ENCODE measurements at regions of chr2 and their contacts with region 1.

Region 1: GRCh38 chr2:100984892-100985379 is 17.2 kb upstream of the RPL31 start:
- DNase-seq: peak; percentile 81
- ATAC-seq: peak; percentile 80
- H3K4me3 ChIP-seq: no peak overlapping the region
- H3K27ac ChIP-seq: no peak overlapping the region
- H3K4me1 ChIP-seq: peaks cover 10% of the 10 kb centered on the region
- H3K27me3 ChIP-seq: no peaks in the 10 kb centered on the region
- CTCF ChIP-seq: peak; percentile 98
- EP300 ChIP-seq: no peak
- POLR2A ChIP-seq: no peak
- RAD21 ChIP-seq: peak; percentile 93

Region 2: GRCh38 chr2:100592226-100592625 is 392.7 kb before region 1 on chr2:
- CTCF ChIA-PET with region 1: interaction called, 9 read pairs
- POLR2A ChIA-PET with region 1: no interaction called
- in situ Hi-C with region 1: no loop called
- intact Hi-C with region 1: loop called (anchors 1 kb)
- DNase-seq: no peak
- ATAC-seq: no peak
- H3K4me3 ChIP-seq: no peak overlapping the region
- H3K27ac ChIP-seq: no peak overlapping the region
- H3K4me1 ChIP-seq: 0 out of 2 replicates have a peak, but pooled peaks cover 6% of the 10 kb centered on the region
- H3K27me3 ChIP-seq: no peaks in the 10 kb centered on the region
- CTCF ChIP-seq: no peak
- EP300 ChIP-seq: no peak
- POLR2A ChIP-seq: no peak
- RAD21 ChIP-seq: no peak

Region 3: DNA sequence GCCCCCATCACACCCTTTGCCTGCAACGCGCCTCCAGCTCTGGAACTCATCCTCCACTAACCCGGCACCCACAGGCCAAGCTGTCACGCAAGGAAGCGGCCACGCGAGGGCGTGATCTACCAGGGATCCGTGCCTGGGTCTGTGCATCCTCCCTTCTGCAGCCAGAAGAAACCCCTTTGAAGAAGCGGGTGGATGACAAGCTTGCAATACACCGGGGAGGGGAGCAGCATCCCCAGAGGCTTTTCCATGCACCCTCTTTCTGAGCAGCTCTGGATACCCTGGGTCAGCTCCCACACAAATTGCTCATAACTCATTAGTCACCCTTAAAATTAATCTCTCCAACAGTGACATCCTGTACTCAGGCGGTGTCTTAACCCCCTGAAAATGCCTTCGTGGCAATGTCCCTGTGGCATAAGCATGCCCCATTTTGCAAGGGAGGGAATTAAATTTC is 374.5 kb before region 1 on chr2:
- CTCF ChIA-PET with region 1: interaction called, 31 read pairs
- POLR2A ChIA-PET with region 1: no interaction called
- in situ Hi-C with region 1: no loop called
- intact Hi-C with region 1: loop called (anchors 1 kb)
- DNase-seq: peak; percentile 36
- ATAC-seq: peak; percentile 77
- H3K4me3 ChIP-seq: no peak overlapping the region
- H3K27ac ChIP-seq: no peak overlapping the region
- H3K4me1 ChIP-seq: peaks cover 19% of the 10 kb centered on the region
- H3K27me3 ChIP-seq: peaks cover 2 to 56% of the 10 kb centered on the region in 2 experiments; a peak in 4 of 5 replicates
- CTCF ChIP-seq: peak; percentile 94
- EP300 ChIP-seq: no peak
- POLR2A ChIP-seq: no peak
- RAD21 ChIP-seq: peak; percentile 62

Region 4: GRCh38 chr2:100670232-100670631 is 314.7 kb before region 1 on chr2:
- CTCF ChIA-PET with region 1: no interaction called
- POLR2A ChIA-PET with region 1: no interaction called
- in situ Hi-C with region 1: no loop called
- intact Hi-C with region 1: loop called (anchors 2 kb)
- DNase-seq: peak; percentile 46
- ATAC-seq: peak; percentile 95
- H3K4me3 ChIP-seq: no peak overlapping the region
- H3K27ac ChIP-seq: no peak overlapping the region
- H3K4me1 ChIP-seq: 0 out of 2 replicates have a peak, but pooled peaks cover 6% of the 10 kb centered on the region
- H3K27me3 ChIP-seq: peaks cover 2 to 46% of the 10 kb centered on the region in 2 experiments; a peak in 4 of 5 replicates
- CTCF ChIP-seq: peak; percentile 52
- EP300 ChIP-seq: no peak
- POLR2A ChIP-seq: no peak
- RAD21 ChIP-seq: no peak

Region 5: DNA sequence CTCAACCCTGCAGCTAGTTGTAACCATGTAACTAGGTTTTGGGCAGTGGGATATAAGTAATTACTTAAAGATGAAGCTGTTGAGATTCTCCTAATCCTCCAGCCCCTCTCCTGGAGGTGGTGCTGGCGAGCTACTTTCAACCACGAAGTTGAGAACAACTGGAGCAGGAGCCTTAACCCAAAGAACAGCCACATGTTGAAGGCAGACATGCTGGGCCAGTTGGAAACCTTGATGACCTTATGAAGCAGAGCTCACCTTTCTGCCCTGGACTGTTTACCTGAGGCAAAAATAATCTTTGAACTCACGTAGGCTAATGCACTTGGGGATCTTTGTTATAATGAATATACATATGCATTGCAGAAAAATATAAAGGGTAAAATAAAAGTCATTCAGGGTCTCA is 254.6 kb before region 1 on chr2:
- CTCF ChIA-PET with region 1: interaction called, 41 read pairs
- POLR2A ChIA-PET with region 1: no interaction called
- in situ Hi-C with region 1: loop called (anchors 5 kb)
- intact Hi-C with region 1: loop called (anchors 1 kb)
- DNase-seq: peak; percentile 82
- ATAC-seq: peak; percentile 94
- H3K4me3 ChIP-seq: no peak overlapping the region
- H3K27ac ChIP-seq: no peak overlapping the region
- H3K4me1 ChIP-seq: peaks cover 34% of the 10 kb centered on the region
- H3K27me3 ChIP-seq: peaks cover 0 to 2% of the 10 kb centered on the region in 2 experiments; a peak in 1 of 5 replicates
- CTCF ChIP-seq: peak; percentile 88
- EP300 ChIP-seq: no peak
- POLR2A ChIP-seq: no peak
- RAD21 ChIP-seq: peak; percentile 94

Region 6: DNA sequence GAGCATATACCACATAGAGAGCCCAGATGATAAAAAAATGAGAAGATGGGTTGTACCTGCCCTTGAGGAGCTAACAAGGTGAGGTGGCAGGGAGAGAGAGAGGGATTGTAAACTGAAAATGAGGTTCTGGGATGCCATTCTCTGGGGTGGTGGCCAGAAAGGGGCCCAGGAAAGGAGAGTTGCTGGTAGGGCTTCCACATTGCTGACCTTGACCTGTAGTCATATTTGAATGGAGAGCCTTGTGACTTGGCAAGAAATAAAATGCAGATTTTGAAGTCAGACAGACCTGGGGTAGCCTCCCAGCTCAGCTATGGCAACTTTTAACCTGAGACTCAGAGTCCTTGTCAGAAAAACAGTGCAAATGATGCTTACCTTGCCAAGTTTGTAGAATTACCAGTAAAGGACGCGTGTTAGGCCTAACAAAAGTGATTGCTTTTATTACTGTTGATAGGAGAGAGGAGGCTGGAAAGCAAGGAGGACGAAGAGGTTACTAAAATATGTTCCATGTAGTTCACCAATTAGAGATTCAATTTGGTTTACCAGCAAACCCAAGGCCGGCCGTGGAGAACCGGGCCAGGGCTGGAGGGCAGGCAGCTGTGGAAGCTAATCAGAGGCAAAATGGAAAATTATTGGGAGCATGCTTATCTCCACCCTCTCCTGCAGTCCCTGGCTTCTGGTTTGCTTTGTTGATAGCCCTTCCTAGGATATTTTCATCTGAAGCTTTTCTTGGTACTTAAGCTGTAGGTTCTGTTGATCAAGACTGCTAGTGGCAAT is 161.1 kb before region 1 on chr2:
- CTCF ChIA-PET with region 1: interaction called, 4 read pairs
- POLR2A ChIA-PET with region 1: no interaction called
- in situ Hi-C with region 1: no loop called
- intact Hi-C with region 1: loop called (anchors 2 kb)
- DNase-seq: peak; percentile 46
- ATAC-seq: no peak
- H3K4me3 ChIP-seq: no peak overlapping the region
- H3K27ac ChIP-seq: peak overlapping the region; percentile 71
- H3K4me1 ChIP-seq: peaks cover 73% of the 10 kb centered on the region
- H3K27me3 ChIP-seq: no peaks in the 10 kb centered on the region; a peak in 1 of 5 replicates
- CTCF ChIP-seq: no peak
- EP300 ChIP-seq: peak in 1 of 2 experiments; percentile 33; a peak in 1 of 4 replicates
- POLR2A ChIP-seq: no peak
- RAD21 ChIP-seq: no peak

Region 7: DNA sequence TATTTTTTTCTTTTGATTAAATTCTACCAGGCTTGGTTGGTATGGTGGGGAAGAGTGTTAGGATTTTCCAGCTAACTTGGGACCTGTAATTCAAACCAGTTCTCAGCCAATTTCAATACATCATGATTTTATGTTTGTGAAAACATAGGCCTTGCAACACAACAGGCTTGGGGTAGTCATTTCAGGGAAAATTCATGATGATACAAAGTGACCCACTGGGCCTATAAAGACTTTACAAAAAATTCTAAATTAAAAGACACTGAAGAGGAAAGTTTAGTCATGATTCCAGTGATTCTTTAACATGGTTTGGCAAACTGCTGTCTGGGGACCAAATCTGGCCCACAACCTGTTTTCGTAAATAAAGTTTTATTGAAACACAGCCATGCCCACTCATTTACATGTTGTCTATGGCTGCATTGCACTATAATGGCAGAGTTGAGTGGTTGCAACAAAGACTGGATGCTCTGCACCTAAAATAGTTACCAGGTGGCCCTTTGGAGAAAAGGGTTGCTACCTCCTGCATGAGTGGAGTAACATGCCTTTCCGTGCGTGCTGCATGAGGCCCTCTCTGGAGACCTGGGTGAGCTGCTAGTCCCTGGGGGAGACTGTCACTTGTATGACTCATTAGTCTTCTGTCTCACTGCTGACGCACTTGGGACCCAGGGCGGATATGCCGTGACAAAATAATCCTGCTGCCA is 91.4 kb before region 1 on chr2:
- CTCF ChIA-PET with region 1: no interaction called
- POLR2A ChIA-PET with region 1: no interaction called
- in situ Hi-C with region 1: no loop called
- intact Hi-C with region 1: loop called (anchors 10 kb)
- DNase-seq: peak; percentile 55
- ATAC-seq: peak; percentile 36
- H3K4me3 ChIP-seq: no peak overlapping the region
- H3K27ac ChIP-seq: peak overlapping the region; percentile 31
- H3K4me1 ChIP-seq: peaks cover 74% of the 10 kb centered on the region
- H3K27me3 ChIP-seq: no peaks in the 10 kb centered on the region
- CTCF ChIP-seq: no peak
- EP300 ChIP-seq: no peak
- POLR2A ChIP-seq: no peak
- RAD21 ChIP-seq: no peak

Region 8: GRCh38 chr2:101120172-101120996 is 135.4 kb after region 1 on chr2:
- CTCF ChIA-PET with region 1: no interaction called
- POLR2A ChIA-PET with region 1: no interaction called
- in situ Hi-C with region 1: no loop called
- intact Hi-C with region 1: no loop called
- DNase-seq: peak; percentile 98
- ATAC-seq: peak; percentile 69
- H3K4me3 ChIP-seq: peak overlapping the region in 1 of 3 experiments; percentile 11; a peak in 1 of 6 replicates
- H3K27ac ChIP-seq: peak overlapping the region; percentile 79
- H3K4me1 ChIP-seq: peaks cover 97% of the 10 kb centered on the region
- H3K27me3 ChIP-seq: no peaks in the 10 kb centered on the region
- CTCF ChIP-seq: no peak
- EP300 ChIP-seq: peak; percentile 42 to 75; a peak in 2 of 4 replicates
- POLR2A ChIP-seq: 0 out of 4 replicates have a peak, but pooled peaks of 1 of the 2 experiments have one; percentile 38
- RAD21 ChIP-seq: peak; percentile 49; the same call in 1 of the 2 replicates

Measured in HepG2 (cell line).